ENCODE measurements at regions of chr2 and their contacts with region 1.

Region 1: GRCh38 chr2:218659258-218659987 is at the starts of genes BCS1L and ZNF142:
- DNase-seq: peak; percentile 94 to 95 (median 95)
- H3K4me3 ChIP-seq: peak within 1 kb of the TSS; percentile 81 to 96 (median 90)
- H3K27ac ChIP-seq: peak within 1 kb of the TSS; percentile 18 to 60
- H3K4me1 ChIP-seq: peaks cover 6 to 19% (median 17%) of the 10 kb centered on the region in 4 experiments
- H3K27me3 ChIP-seq: no peaks in the 10 kb centered on the region

Region 2: GRCh38 chr2:218631837-218632236 is 27.6 kb before region 1 on chr2:
- CTCF ChIA-PET with region 1: no interaction called
- POLR2A ChIA-PET with region 1: no interaction called
- DNase-seq: no peak
- H3K4me3 ChIP-seq: no peak overlapping the region
- H3K27ac ChIP-seq: no peak overlapping the region
- H3K4me1 ChIP-seq: no peaks in the 10 kb centered on the region
- H3K27me3 ChIP-seq: no peaks in the 10 kb centered on the region

Region 3: DNA sequence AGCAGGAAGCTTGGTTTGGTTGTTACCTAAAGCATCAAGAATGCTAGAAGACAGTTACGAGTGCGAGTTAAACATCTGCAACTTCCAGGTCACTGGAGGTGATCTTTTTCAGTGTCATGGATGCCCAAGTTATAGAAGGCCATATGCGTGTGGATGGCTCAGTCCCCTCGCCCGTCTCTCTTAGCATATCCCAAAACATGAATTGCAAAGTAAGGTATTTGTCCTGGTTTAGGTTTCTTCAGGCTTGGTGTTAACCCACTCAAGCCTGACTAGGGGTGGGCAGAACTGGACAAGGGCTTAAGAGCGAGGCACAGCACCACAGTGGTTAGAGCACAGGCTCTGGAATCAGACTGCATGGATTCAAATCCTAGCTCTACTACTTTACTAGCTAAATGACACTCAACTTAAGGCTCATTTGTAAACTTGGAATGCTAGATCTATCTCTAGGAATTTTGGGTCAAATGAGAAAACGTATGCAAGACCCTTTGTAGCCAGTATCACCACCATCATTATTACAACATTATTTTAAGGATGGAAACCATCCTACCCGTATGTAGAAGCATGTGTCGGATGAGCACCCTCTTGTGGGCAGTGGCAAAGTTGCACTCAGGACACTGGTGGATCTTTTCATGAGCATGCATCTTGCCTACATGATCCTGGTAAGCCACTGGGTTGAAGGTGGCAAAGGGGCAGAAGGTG is 11.2 kb before region 1 on chr2:
- CTCF ChIA-PET with region 1: interaction called, 75 read pairs
- POLR2A ChIA-PET with region 1: no interaction called
- DNase-seq: peak; percentile 67 to 78 (median 72)
- H3K4me3 ChIP-seq: no peak overlapping the region
- H3K27ac ChIP-seq: no peak overlapping the region
- H3K4me1 ChIP-seq: no peaks in the 10 kb centered on the region
- H3K27me3 ChIP-seq: no peaks in the 10 kb centered on the region

Region 4: GRCh38 chr2:218671654-218672566 is 12.5 kb after region 1 on chr2 and contains the starts of genes RNF25 and STK36:
- CTCF ChIA-PET with region 1: interaction called, 40 read pairs
- POLR2A ChIA-PET with region 1: interaction called, 3 read pairs
- DNase-seq: peak; percentile 82 to 92 (median 86)
- H3K4me3 ChIP-seq: peak within 1 kb of the TSS; percentile 54 to 97 (median 90)
- H3K27ac ChIP-seq: peak within 1 kb of the TSS; percentile 67 to 83
- H3K4me1 ChIP-seq: peaks cover 0 to 20% (median 14%) of the 10 kb centered on the region in 4 experiments
- H3K27me3 ChIP-seq: no peaks in the 10 kb centered on the region

Region 5: GRCh38 chr2:218691234-218691633 is 31.8 kb after region 1 on chr2:
- CTCF ChIA-PET with region 1: interaction called, 14 read pairs
- POLR2A ChIA-PET with region 1: interaction called, 3 read pairs
- DNase-seq: no peak
- H3K4me3 ChIP-seq: no peak overlapping the region
- H3K27ac ChIP-seq: no peak overlapping the region
- H3K4me1 ChIP-seq: no peaks in the 10 kb centered on the region
- H3K27me3 ChIP-seq: no peaks in the 10 kb centered on the region